ENCODE measurements at regions of chr9 and their contacts with region 1.

Region 1: DNA sequence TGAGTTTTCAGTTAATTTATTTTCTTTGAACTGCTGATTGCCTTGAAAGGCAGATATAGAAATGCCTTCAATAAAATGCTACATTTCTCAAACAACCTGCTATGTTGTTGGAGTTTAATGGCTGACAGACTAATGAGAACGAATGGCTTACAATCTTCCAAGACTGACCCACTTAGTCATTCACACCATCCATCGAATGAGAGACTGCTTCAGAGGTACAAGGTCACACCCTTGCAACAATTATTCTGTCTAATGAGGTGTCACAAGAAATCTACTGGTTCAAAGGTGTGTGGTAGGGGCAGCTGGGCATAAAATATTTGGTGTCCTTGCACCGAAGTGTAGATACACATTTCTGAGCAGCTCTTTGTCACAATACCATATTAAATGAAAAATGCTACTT is 18.3 kb downstream of the PTPRD start:
- DNase-seq: no peak
- H3K4me3 ChIP-seq: no peak overlapping the region
- H3K27ac ChIP-seq: no peak overlapping the region
- H3K4me1 ChIP-seq: no peaks in the 10 kb centered on the region
- H3K27me3 ChIP-seq: no peaks in the 10 kb centered on the region
- CTCF ChIP-seq: no peak
- EP300 ChIP-seq: no peak
- POLR2A ChIP-seq: no peak

Region 2: GRCh38 chr9:10534850-10535249 is 59.6 kb before region 1 on chr9:
- intact Hi-C with region 1: no loop called
- DNase-seq: no peak
- H3K4me3 ChIP-seq: no peak overlapping the region
- H3K27ac ChIP-seq: no peak overlapping the region
- H3K4me1 ChIP-seq: no peaks in the 10 kb centered on the region
- H3K27me3 ChIP-seq: no peaks in the 10 kb centered on the region
- CTCF ChIP-seq: no peak
- EP300 ChIP-seq: no peak
- POLR2A ChIP-seq: no peak

Region 3: DNA sequence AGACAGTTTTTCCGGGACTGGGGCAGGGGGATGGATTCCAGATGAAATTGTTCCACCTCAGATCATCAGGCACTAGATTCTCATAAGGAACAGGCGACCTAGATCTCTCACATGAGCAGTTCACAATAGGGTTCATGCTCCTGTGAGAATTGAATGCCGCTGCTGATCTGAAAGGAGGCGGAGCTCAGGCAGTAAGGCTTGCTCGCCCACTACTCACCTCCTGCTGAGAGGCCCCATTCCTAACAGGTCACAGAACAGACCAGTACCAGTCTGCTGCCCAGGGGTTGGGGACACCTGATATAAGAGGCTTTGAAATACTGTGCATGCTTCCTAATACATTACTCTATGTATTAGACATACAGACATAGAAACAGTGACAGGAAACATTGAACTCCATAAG is 22.8 kb before region 1 on chr9:
- intact Hi-C with region 1: loop called in 1 of 4 experiments (anchors 2 kb)
- DNase-seq: no peak
- H3K4me3 ChIP-seq: no peak overlapping the region
- H3K27ac ChIP-seq: no peak overlapping the region
- H3K4me1 ChIP-seq: no peaks in the 10 kb centered on the region
- H3K27me3 ChIP-seq: no peaks in the 10 kb centered on the region
- CTCF ChIP-seq: no peak
- EP300 ChIP-seq: no peak
- POLR2A ChIP-seq: no peak